Activated CD4-positive, alpha-beta T cell treated with anti-CD3 and anti-CD28 coated beads for 36 hours (primary cell): ENCODE measurements at regions of chr21 and their contacts with region 1.

Region 1: DNA sequence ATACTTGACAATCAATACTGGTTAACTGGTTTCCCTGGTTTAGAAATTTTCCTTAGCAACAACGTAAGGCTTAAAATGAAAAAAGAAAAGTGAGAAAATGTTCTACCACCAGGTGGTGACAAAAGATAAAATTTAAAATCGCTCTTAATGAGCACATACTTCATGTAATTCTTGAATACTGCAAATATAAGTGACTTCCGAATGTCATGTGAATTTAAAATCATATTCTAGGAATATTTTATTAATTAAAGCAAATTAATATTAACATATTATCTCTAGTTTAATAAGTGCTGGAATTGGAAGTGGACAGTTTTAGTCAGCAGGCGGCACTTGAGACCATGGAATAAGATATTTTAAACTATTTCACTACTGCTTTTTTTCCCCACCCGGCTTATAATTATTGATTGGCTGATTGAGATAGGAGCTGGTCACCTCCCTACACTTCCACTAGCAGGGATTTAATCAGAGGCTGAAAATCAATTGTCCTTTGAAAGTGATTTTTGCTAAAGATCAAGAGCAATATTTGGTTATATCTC is 5.0 kb upstream of the ADAMTS1 start:
- DNase-seq: no peak
- ATAC-seq: no peak
- H3K4me3 Mint-ChIP-seq: no peak overlapping the region
- H3K27ac Mint-ChIP-seq: no peak overlapping the region
- H3K4me1 Mint-ChIP-seq: peaks cover 18% of the 10 kb centered on the region
- H3K27me3 Mint-ChIP-seq: peaks cover 39% of the 10 kb centered on the region

Region 2: DNA sequence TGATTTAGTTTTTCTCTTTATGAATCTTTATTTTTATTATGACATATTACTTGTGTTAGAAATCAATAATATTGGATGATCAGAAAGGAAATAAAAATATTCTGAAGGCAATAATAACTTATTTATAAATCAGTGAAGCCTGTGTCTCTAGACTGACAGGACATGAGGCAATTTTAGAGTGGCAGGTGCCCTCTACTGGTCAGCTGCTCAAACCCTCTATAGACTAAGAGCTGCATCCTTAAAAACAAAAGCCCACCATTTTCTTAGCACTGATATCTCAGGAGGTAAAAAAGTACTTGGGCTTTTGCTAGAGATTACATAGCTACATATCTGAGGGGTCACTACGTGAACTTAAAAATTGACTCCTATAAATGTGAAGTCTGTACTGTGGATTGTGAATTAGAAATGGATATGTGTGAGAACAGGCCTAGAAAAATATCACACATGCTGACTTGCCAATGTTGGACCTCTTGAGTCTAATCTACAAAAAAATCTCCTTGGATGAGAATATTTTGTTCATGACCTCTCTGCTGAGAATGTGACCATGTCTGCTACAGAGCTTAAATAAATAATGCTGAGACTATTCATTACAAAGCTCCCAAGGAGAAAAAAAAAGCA is 714.6 kb after region 1 on chr21:
- CTCF ChIA-PET with region 1: interaction called, 3 read pairs
- POLR2A ChIA-PET with region 1: no interaction called
- intact Hi-C with region 1: loop called (anchors 2 kb)
- DNase-seq: peak; percentile 24
- ATAC-seq: no peak
- H3K4me3 Mint-ChIP-seq: no peak overlapping the region
- H3K27ac Mint-ChIP-seq: no peak overlapping the region
- H3K4me1 Mint-ChIP-seq: no peaks in the 10 kb centered on the region
- H3K27me3 Mint-ChIP-seq: no peaks in the 10 kb centered on the region

Region 3: GRCh38 chr21:27700974-27701614 is 850.9 kb after region 1 on chr21:
- CTCF ChIA-PET with region 1: interaction called, 23 read pairs
- POLR2A ChIA-PET with region 1: no interaction called
- intact Hi-C with region 1: loop called (anchors 1 kb)
- DNase-seq: peak; percentile 83
- ATAC-seq: peak; percentile 69
- H3K4me3 Mint-ChIP-seq: no peak overlapping the region
- H3K27ac Mint-ChIP-seq: no peak overlapping the region
- H3K4me1 Mint-ChIP-seq: no peaks in the 10 kb centered on the region
- H3K27me3 Mint-ChIP-seq: peaks cover 5% of the 10 kb centered on the region

Region 4: DNA sequence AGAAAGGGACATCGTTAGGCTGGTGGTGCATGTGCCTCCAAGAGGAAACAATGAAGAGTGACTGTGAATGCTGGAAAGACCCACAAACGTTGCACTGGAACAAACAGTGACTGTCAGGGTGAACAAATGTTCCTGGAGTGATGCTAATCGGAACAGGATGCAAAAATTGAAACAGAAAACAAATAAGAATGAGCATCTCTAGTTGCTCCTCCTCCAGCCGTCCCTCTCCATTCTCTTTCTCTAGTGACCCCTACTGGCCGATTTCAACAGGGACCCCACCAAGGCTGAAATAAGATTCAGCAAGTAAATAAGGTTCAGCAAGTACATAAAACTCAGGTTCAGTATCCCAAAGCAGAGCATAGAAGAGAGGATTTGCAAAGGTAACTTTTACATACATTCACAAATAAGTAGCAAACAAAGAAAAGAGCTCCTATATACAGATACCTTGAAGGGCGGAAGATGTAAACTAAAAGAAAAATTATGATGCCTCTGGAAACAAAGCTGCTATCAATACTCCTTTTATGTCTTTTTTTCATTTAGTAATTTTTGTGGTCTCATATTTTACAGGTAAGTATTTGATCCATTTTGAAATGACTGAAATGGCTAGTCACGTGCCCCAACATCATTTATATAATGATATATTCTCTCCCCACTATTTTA is 952.8 kb after region 1 on chr21:
- CTCF ChIA-PET with region 1: no interaction called
- POLR2A ChIA-PET with region 1: no interaction called
- intact Hi-C with region 1: loop called (anchors 1 to 5 kb)
- DNase-seq: peak; percentile 41
- ATAC-seq: peak; percentile 53
- H3K4me3 Mint-ChIP-seq: no peak overlapping the region
- H3K27ac Mint-ChIP-seq: no peak overlapping the region
- H3K4me1 Mint-ChIP-seq: no peaks in the 10 kb centered on the region
- H3K27me3 Mint-ChIP-seq: no peaks in the 10 kb centered on the region

Region 5: GRCh38 chr21:28336314-28336713 is 1486.1 kb after region 1 on chr21:
- CTCF ChIA-PET with region 1: no interaction called
- POLR2A ChIA-PET with region 1: no interaction called
- intact Hi-C with region 1: loop called (anchors 2 to 5 kb)
- DNase-seq: no peak
- ATAC-seq: no peak
- H3K4me3 Mint-ChIP-seq: no peak overlapping the region
- H3K27ac Mint-ChIP-seq: no peak overlapping the region
- H3K4me1 Mint-ChIP-seq: no peaks in the 10 kb centered on the region
- H3K27me3 Mint-ChIP-seq: no peaks in the 10 kb centered on the region